CD8-positive, alpha-beta memory T cell (primary cell): ENCODE measurements at regions of chr14 and their contacts with region 1.

Region 1: GRCh38 chr14:103711893-103712533 is 3.2 kb downstream of the XRCC3 start:
- DNase-seq: no peak
- H3K4me3 ChIP-seq: no peak overlapping the region
- H3K4me3 Mint-ChIP-seq: peak overlapping the region in 2 of 7 donors; percentile 20 to 51
- H3K27ac ChIP-seq: no peak overlapping the region
- H3K27ac Mint-ChIP-seq: no peak overlapping the region
- H3K4me1 ChIP-seq: peaks cover 17% of the 10 kb centered on the region
- H3K4me1 Mint-ChIP-seq: peaks cover 12 to 39% (median 19%) of the 10 kb centered on the region in 3 donors
- H3K27me3 ChIP-seq: no peaks in the 10 kb centered on the region
- H3K27me3 Mint-ChIP-seq: peaks cover 0 to 2% of the 10 kb centered on the region in 2 donors

Region 2: GRCh38 chr14:103694572-103695026 is 17.4 kb before region 1 on chr14:
- CTCF ChIA-PET with region 1: no interaction called
- POLR2A ChIA-PET with region 1: interaction called, 11 read pairs
- DNase-seq: no peak
- H3K4me3 ChIP-seq: no peak overlapping the region
- H3K4me3 Mint-ChIP-seq: no peak overlapping the region
- H3K27ac ChIP-seq: no peak overlapping the region
- H3K27ac Mint-ChIP-seq: no peak overlapping the region
- H3K4me1 ChIP-seq: no peaks in the 10 kb centered on the region
- H3K4me1 Mint-ChIP-seq: peaks cover 4 to 9% (median 5%) of the 10 kb centered on the region in 3 donors
- H3K27me3 ChIP-seq: no peaks in the 10 kb centered on the region
- H3K27me3 Mint-ChIP-seq: no peaks in the 10 kb centered on the region

Region 3: DNA sequence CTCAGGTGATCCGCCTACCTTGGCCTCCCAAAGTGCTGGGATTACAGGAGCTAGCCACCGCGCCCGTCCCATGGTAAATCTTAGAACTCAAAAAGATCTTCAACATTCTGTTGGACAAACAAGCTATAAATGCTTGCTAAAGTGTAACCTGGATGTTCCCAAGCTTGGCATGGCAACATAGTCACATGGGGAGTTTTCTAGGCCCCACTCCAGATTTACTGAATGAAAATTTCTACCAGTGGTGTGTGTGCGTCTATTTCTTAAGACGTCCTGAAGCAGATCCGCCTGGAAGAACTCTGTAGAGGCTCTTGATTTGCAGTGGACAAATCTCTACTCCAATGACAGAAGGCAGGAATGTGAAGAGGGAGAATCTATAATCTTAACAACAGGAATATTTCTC is 63.5 kb after region 1 on chr14:
- CTCF ChIA-PET with region 1: no interaction called
- POLR2A ChIA-PET with region 1: no interaction called
- DNase-seq: no peak
- H3K4me3 ChIP-seq: no peak overlapping the region
- H3K4me3 Mint-ChIP-seq: no peak overlapping the region
- H3K27ac ChIP-seq: no peak overlapping the region
- H3K27ac Mint-ChIP-seq: no peak overlapping the region
- H3K4me1 ChIP-seq: no peaks in the 10 kb centered on the region
- H3K4me1 Mint-ChIP-seq: no peaks in the 10 kb centered on the region
- H3K27me3 ChIP-seq: no peaks in the 10 kb centered on the region
- H3K27me3 Mint-ChIP-seq: no peaks in the 10 kb centered on the region

Region 4: GRCh38 chr14:103984196-103984595 is 272.2 kb after region 1 on chr14:
- CTCF ChIA-PET with region 1: no interaction called
- POLR2A ChIA-PET with region 1: no interaction called
- DNase-seq: no peak
- H3K4me3 ChIP-seq: no peak overlapping the region
- H3K4me3 Mint-ChIP-seq: no peak overlapping the region
- H3K27ac ChIP-seq: no peak overlapping the region
- H3K27ac Mint-ChIP-seq: no peak overlapping the region
- H3K4me1 ChIP-seq: no peaks in the 10 kb centered on the region
- H3K4me1 Mint-ChIP-seq: no peaks in the 10 kb centered on the region
- H3K27me3 ChIP-seq: no peaks in the 10 kb centered on the region
- H3K27me3 Mint-ChIP-seq: peaks cover 15 to 27% of the 10 kb centered on the region in 2 donors